ENCODE measurements at regions of chr5 and their contacts with region 1.

Region 1: GRCh38 chr5:69334793-69335268 is 2.2 kb upstream of the CCDC125 start:
- DNase-seq: peak; percentile 85
- ATAC-seq: peak; percentile 91
- H3K4me3 Mint-ChIP-seq: no peak overlapping the region; the same call in 1 of the 2 replicates
- H3K27ac Mint-ChIP-seq: no peak overlapping the region
- H3K4me1 Mint-ChIP-seq: peaks cover 13% of the 10 kb centered on the region
- H3K27me3 Mint-ChIP-seq: peaks cover 14% of the 10 kb centered on the region
- CTCF ChIP-seq: peak; percentile 53

Region 2: GRCh38 chr5:69042915-69043658 is 291.7 kb before region 1 on chr5:
- CTCF ChIA-PET with region 1: interaction called, 10 read pairs
- POLR2A ChIA-PET with region 1: no interaction called
- DNase-seq: peak; percentile 66
- ATAC-seq: peak; percentile 85
- H3K4me3 Mint-ChIP-seq: peak overlapping the region; percentile 68
- H3K27ac Mint-ChIP-seq: no peak overlapping the region; the same call in 1 of the 2 replicates
- H3K4me1 Mint-ChIP-seq: peaks cover 4% of the 10 kb centered on the region; the same call in 1 of the 2 replicates
- H3K27me3 Mint-ChIP-seq: no peaks in the 10 kb centered on the region; the same call in 1 of the 2 replicates
- CTCF ChIP-seq: peak; percentile 90

Region 3: GRCh38 chr5:69265931-69266330 is 68.9 kb before region 1 on chr5:
- CTCF ChIA-PET with region 1: interaction called, 31 read pairs
- POLR2A ChIA-PET with region 1: interaction called, 5 read pairs
- DNase-seq: peak; percentile 82
- ATAC-seq: peak; percentile 100
- H3K4me3 Mint-ChIP-seq: no peak overlapping the region
- H3K27ac Mint-ChIP-seq: peak overlapping the region; percentile 27; the same call in 1 of the 2 replicates
- H3K4me1 Mint-ChIP-seq: no peaks in the 10 kb centered on the region
- H3K27me3 Mint-ChIP-seq: no peaks in the 10 kb centered on the region
- CTCF ChIP-seq: peak; percentile 50

Region 4: DNA sequence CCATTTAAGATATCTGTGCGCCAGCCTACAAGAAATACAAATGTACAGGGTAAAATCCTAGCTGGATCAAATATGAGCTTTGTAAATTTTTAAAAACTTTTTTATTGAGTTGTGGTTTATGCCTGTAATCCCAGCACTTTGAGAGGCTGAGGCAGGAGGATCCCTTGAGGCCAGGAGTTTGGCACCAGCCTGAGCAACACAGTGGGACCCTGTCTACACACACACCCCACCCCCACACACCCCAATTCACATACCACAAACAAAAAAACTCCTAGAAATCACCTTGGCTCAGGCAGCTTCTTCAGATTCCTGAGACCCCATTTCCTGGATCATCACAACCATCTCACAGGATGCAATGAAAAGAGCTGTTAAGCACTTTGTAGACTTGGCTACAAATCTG is 53.7 kb before region 1 on chr5:
- CTCF ChIA-PET with region 1: interaction called, 10 read pairs
- POLR2A ChIA-PET with region 1: interaction called, 4 read pairs
- DNase-seq: no peak
- ATAC-seq: peak; percentile 46; the same call in 1 of the 2 replicates
- H3K4me3 Mint-ChIP-seq: no peak overlapping the region
- H3K27ac Mint-ChIP-seq: peak overlapping the region; percentile 63; the same call in 1 of the 2 replicates
- H3K4me1 Mint-ChIP-seq: peaks cover 7% of the 10 kb centered on the region; the same call in 1 of the 2 replicates
- H3K27me3 Mint-ChIP-seq: no peaks in the 10 kb centered on the region
- CTCF ChIP-seq: no peak

Region 5: DNA sequence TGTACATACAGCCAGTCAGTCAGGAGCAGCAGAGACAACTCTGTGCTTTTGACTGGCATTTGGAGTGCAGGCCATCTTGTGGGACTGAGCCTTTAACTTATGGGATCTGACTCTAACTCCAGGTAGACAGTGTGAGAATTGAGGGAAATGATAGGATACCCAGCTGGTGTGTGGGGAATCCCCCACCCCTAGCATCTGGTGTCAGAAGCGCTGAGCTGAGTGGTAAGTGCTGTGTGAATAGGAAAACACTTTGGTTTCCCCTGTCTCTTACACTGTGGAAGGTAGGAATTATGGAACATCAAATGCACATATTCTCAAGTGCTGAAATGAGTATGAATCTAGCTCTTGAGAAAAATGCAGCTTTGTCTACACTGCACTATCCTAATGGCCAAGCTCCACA is 46.1 kb before region 1 on chr5:
- CTCF ChIA-PET with region 1: interaction called, 11 read pairs
- POLR2A ChIA-PET with region 1: interaction called, 3 read pairs
- DNase-seq: no peak
- ATAC-seq: no peak; the same call in 1 of the 2 replicates
- H3K4me3 Mint-ChIP-seq: no peak overlapping the region
- H3K27ac Mint-ChIP-seq: no peak overlapping the region
- H3K4me1 Mint-ChIP-seq: peaks cover 13% of the 10 kb centered on the region
- H3K27me3 Mint-ChIP-seq: no peaks in the 10 kb centered on the region
- CTCF ChIP-seq: no peak